Heart left ventricle (tissue), 16 donors: ENCODE measurements at regions of chr13 and their contacts with region 1.

Region 1: GRCh38 chr13:43991773-43992201 is 112.1 kb downstream of the LACC1 start:
- DNase-seq: peak; percentile 27 to 90 (median 75)
- ATAC-seq: peak; percentile 43 to 97 (median 88)
- H3K4me3 ChIP-seq: no peak overlapping the region
- H3K27ac ChIP-seq: peak overlapping the region in 1 of 12 donors; percentile 7
- H3K4me1 ChIP-seq: peaks cover 0 to 31% (median 7%) of the 10 kb centered on the region in 12 donors
- H3K27me3 ChIP-seq: peaks cover 0 to 5% (median 0%) of the 10 kb centered on the region in 9 donors
- CTCF ChIP-seq: no peak
- POLR2A ChIP-seq: no peak

Region 2: DNA sequence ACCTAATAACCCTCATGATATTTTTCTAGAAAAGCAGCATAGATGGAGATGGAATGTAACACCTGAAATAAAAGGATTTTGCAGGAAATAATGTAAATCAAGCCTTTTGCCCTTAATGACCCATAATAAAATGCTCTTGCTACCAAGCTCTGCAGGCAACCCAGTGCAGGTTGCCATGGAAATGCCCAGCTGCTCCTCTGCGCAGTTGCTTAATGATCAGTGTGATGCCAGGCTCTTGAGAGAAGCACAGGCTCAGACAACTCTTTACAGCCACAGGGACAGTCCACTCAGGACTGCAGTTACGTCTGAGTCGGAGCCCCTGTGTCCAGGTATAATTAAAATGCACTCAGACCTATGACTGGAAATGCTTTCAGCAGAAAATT is 53.4 kb after region 1 on chr13:
- intact Hi-C with region 1: loop called in 2 of 10 experiments (anchors 5 kb)
- DNase-seq: no peak
- ATAC-seq: no peak
- H3K4me3 ChIP-seq: no peak overlapping the region
- H3K27ac ChIP-seq: no peak overlapping the region
- H3K4me1 ChIP-seq: peaks cover 0 to 5% (median 0%) of the 10 kb centered on the region in 12 donors
- H3K27me3 ChIP-seq: peaks cover 0 to 2% (median 0%) of the 10 kb centered on the region in 9 donors
- CTCF ChIP-seq: no peak
- POLR2A ChIP-seq: no peak

Region 3: DNA sequence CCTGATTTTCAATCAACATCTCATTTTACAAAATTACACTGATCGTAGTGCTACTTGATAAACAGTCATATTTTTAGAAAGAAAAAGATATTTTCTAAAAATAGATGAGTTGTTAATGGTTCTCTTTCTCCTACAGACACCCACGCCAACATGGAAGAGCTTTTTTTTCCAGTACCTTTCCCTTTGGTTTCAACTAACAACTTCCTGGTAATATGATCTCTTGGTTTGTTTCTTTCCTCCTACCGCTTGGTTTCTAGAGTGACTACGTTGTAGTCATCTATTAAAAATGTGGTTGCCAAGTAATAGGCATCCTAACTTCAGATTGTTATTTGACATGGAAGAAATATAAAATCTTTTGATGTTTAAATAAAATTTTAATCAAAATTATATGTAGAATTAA is 77.0 kb after region 1 on chr13:
- intact Hi-C with region 1: no loop called
- DNase-seq: no peak
- ATAC-seq: no peak
- H3K4me3 ChIP-seq: no peak overlapping the region
- H3K27ac ChIP-seq: no peak overlapping the region
- H3K4me1 ChIP-seq: peaks cover 0 to 9% (median 0%) of the 10 kb centered on the region in 12 donors
- H3K27me3 ChIP-seq: no peaks in the 10 kb centered on the region
- CTCF ChIP-seq: no peak
- POLR2A ChIP-seq: no peak